Psoas muscle (tissue), 8 donors: ENCODE measurements at regions of chr18 and their contacts with region 1.

Region 1: DNA sequence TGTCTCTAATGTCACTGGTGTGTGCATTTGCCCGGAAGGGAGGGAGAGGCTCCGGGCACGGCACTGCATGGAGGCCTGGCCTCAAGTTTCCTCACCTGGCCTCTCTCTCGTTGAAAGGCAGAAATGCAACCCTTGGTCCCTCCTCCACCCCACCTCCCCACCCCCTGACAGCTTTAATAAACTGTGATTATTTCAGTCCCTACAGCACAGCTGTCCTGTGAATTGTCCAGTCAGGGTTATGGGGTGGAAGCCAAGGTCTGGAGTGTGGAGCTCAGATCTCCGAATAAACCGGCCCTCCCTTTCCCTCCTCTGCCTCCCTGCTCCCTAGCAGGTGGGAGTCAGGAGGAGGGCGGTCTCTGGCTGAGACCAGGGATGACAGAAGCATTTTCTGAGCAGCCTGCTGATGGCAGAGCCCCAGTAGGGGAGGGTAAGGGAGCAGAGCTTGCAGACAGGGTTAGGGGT is 199.2 kb upstream of the SMAD2 start:
- DNase-seq: no peak
- ATAC-seq: peak; percentile 71 to 93 (median 89)
- H3K4me3 ChIP-seq: no peak overlapping the region
- H3K27ac ChIP-seq: peak overlapping the region; percentile 33
- H3K4me1 ChIP-seq: peaks cover 3% of the 10 kb centered on the region
- H3K27me3 ChIP-seq: no peaks in the 10 kb centered on the region
- CTCF ChIP-seq: no peak

Region 2: GRCh38 chr18:48319801-48320638 is 190.4 kb after region 1 on chr18:
- intact Hi-C with region 1: loop called in 1 of 2 experiments (anchors 10 kb)
- DNase-seq: no peak
- ATAC-seq: no peak
- H3K4me3 ChIP-seq: no peak overlapping the region
- H3K27ac ChIP-seq: no peak overlapping the region
- H3K4me1 ChIP-seq: no peaks in the 10 kb centered on the region
- H3K27me3 ChIP-seq: no peaks in the 10 kb centered on the region
- CTCF ChIP-seq: no peak